AG04450 (cell line): ENCODE measurements at regions of chr11 and their contacts with region 1.

Region 1: GRCh38 chr11:86938900-86939880 is 16.0 kb downstream of the FZD4 start:
- DNase-seq: no peak
- H3K4me3 ChIP-seq: no peak overlapping the region
- H3K27ac ChIP-seq: no peak overlapping the region
- H3K27me3 ChIP-seq: no peaks in the 10 kb centered on the region
- CTCF ChIP-seq: peak; percentile 67

Region 2: GRCh38 chr11:86818466-86819192 is 120.6 kb before region 1 on chr11:
- CTCF ChIA-PET with region 1: no interaction called
- POLR2A ChIA-PET with region 1: no interaction called
- DNase-seq: peak; percentile 57
- H3K4me3 ChIP-seq: no peak overlapping the region
- H3K27ac ChIP-seq: no peak overlapping the region
- H3K27me3 ChIP-seq: no peaks in the 10 kb centered on the region
- CTCF ChIP-seq: peak; percentile 64

Region 3: DNA sequence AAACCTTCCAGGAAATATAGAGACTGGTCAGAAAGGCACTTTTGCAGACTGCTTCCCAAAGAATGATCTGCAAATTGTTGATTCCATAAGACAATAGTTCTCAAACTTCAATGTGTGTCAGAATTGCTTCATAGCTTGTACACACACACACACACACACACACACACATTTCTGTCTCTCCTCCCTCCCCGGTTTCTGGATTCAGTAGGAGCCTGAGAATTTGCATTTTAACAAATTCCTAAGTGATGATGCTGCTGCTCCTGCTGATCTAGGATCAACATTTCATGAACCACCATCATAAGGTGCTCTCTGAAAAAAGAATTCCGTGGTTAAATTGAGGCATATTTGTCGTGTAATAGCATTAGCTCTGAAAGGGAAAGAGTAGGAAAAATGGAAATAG is 51.3 kb after region 1 on chr11:
- CTCF ChIA-PET with region 1: interaction called, 10 read pairs
- POLR2A ChIA-PET with region 1: no interaction called
- DNase-seq: no peak
- H3K4me3 ChIP-seq: no peak overlapping the region
- H3K27ac ChIP-seq: no peak overlapping the region
- H3K27me3 ChIP-seq: no peaks in the 10 kb centered on the region
- CTCF ChIP-seq: no peak

Region 4: GRCh38 chr11:87046824-87047223 is 107.6 kb after region 1 on chr11:
- CTCF ChIA-PET with region 1: no interaction called
- POLR2A ChIA-PET with region 1: no interaction called
- DNase-seq: no peak
- H3K4me3 ChIP-seq: no peak overlapping the region
- H3K27ac ChIP-seq: no peak overlapping the region
- H3K27me3 ChIP-seq: no peaks in the 10 kb centered on the region
- CTCF ChIP-seq: no peak

Region 5: DNA sequence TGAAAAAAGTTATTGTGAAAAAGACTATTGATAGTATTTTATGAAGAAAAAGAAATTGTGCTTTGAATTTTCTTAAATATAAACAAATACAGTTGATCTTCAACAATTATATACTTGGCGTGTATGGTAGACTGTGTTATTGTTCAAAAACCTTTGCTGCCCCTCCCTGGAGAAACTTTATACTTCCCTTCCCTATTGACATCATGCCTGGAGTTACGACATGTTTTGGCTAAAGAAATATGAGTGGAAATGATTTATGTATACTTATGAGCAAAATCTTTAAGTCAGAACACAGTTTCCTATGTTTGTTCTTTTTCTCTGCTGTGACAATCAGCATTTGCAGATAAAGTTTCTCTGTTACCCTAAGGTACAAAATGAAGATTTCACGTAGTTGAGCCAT is 342.3 kb after region 1 on chr11:
- CTCF ChIA-PET with region 1: interaction called, 172 read pairs
- POLR2A ChIA-PET with region 1: no interaction called
- DNase-seq: no peak
- H3K4me3 ChIP-seq: no peak overlapping the region
- H3K27ac ChIP-seq: no peak overlapping the region
- H3K27me3 ChIP-seq: no peaks in the 10 kb centered on the region
- CTCF ChIP-seq: peak; percentile 36

Region 6: GRCh38 chr11:87300640-87301380 is 361.6 kb after region 1 on chr11:
- CTCF ChIA-PET with region 1: interaction called, 35 read pairs
- POLR2A ChIA-PET with region 1: no interaction called
- DNase-seq: no peak
- H3K4me3 ChIP-seq: no peak overlapping the region
- H3K27ac ChIP-seq: no peak overlapping the region
- H3K27me3 ChIP-seq: no peaks in the 10 kb centered on the region
- CTCF ChIP-seq: no peak

Region 7: GRCh38 chr11:87361891-87362290 is 422.7 kb after region 1 on chr11:
- CTCF ChIA-PET with region 1: no interaction called
- POLR2A ChIA-PET with region 1: no interaction called
- DNase-seq: no peak
- H3K4me3 ChIP-seq: no peak overlapping the region
- H3K27ac ChIP-seq: no peak overlapping the region
- H3K27me3 ChIP-seq: peaks cover 3% of the 10 kb centered on the region
- CTCF ChIP-seq: no peak

Region 8: DNA sequence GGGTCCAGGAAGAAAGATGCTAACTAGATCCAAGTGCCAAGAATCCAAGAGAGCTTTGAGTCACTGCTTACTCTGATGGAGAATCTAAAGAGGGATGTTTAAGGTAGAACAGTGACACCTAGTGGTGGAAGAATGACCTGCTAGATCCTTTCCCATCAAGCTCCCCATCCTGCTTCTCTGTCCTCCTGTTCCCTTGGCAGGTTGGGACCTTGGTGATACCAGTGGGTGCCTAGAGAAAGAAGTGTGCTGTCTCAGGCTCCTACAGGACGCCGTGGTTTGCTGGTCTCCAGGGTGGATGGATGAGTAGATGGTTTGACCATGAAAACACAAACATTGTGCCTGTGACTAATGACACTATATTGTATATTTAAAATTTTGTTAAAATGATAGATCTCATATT is 482.2 kb after region 1 on chr11:
- CTCF ChIA-PET with region 1: interaction called, 34 read pairs
- POLR2A ChIA-PET with region 1: no interaction called
- DNase-seq: peak; percentile 66
- H3K4me3 ChIP-seq: no peak overlapping the region
- H3K27ac ChIP-seq: no peak overlapping the region
- H3K27me3 ChIP-seq: no peaks in the 10 kb centered on the region
- CTCF ChIP-seq: peak; percentile 76

Region 9: GRCh38 chr11:87518266-87518665 is 579.1 kb after region 1 on chr11:
- CTCF ChIA-PET with region 1: no interaction called
- POLR2A ChIA-PET with region 1: no interaction called
- DNase-seq: no peak
- H3K4me3 ChIP-seq: no peak overlapping the region
- H3K27ac ChIP-seq: no peak overlapping the region
- H3K27me3 ChIP-seq: peaks cover 2% of the 10 kb centered on the region
- CTCF ChIP-seq: no peak